CD4-positive, alpha-beta memory T cell (primary cell): ENCODE measurements at regions of chr16 and their contacts with region 1.

Region 1: DNA sequence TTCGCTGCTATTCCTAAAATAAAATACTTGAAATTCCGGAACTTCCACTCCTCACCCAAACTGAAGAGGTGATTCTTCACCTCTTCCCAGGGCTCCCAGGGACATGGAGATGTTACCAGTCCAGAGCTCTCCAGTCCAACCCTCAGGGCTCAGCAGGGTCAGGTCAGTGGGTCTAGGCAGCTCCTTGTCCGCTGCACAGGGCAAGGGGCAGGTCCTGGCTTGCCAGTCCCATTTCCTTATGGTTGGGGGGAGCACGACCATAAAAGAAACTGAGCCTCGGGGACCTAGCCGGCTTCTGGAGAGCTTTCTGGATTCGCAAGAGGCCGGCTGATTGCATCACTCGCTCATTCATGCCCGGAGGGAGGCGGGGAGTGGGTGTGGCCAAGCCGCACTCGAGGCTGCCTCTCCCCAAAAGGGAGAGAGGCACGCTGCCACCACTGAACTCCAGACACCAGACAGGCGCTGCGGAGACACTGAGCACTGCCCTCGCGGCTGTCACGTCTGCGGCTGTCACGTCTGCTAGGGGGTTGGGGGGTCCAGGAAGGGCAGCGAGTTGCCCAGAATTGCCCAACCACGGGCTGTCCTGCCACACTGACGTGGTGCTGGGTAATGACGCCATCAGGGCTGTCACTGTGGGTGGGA is 15.8 kb downstream of the SLC7A5 start:
- DNase-seq: peak; percentile 71 to 96 (median 77)
- H3K4me3 ChIP-seq: peak overlapping the region in 1 of 2 donors; percentile 31
- H3K4me3 Mint-ChIP-seq: peak overlapping the region in 7 of 8 donors; percentile 57 to 85 (median 68)
- H3K27ac ChIP-seq: peak overlapping the region; percentile 17
- H3K27ac Mint-ChIP-seq: peak overlapping the region; percentile 57 to 93 (median 84)
- H3K4me1 ChIP-seq: peaks cover 54% of the 10 kb centered on the region
- H3K4me1 Mint-ChIP-seq: peaks cover 12 to 63% (median 32%) of the 10 kb centered on the region in 4 donors
- H3K27me3 ChIP-seq: no peaks in the 10 kb centered on the region
- H3K27me3 Mint-ChIP-seq: no peaks in the 10 kb centered on the region

Region 2: GRCh38 chr16:87702325-87702811 is 151.2 kb before region 1 on chr16:
- CTCF ChIA-PET with region 1: no interaction called
- POLR2A ChIA-PET with region 1: no interaction called
- intact Hi-C with region 1: no loop called
- DNase-seq: peak in 3 of 5 donors; percentile 11 to 29 (median 24)
- H3K4me3 ChIP-seq: no peak overlapping the region
- H3K4me3 Mint-ChIP-seq: peak overlapping the region in 7 of 8 donors; percentile 15 to 71 (median 63)
- H3K27ac ChIP-seq: no peak overlapping the region
- H3K27ac Mint-ChIP-seq: peak overlapping the region; percentile 60 to 94 (median 86)
- H3K4me1 ChIP-seq: peaks cover 47% of the 10 kb centered on the region
- H3K4me1 Mint-ChIP-seq: peaks cover 28 to 65% (median 38%) of the 10 kb centered on the region in 4 donors
- H3K27me3 ChIP-seq: no peaks in the 10 kb centered on the region
- H3K27me3 Mint-ChIP-seq: no peaks in the 10 kb centered on the region

Region 3: GRCh38 chr16:87834623-87835407 is 18.7 kb before region 1 on chr16:
- CTCF ChIA-PET with region 1: interaction called, 34 read pairs
- POLR2A ChIA-PET with region 1: no interaction called
- intact Hi-C with region 1: no loop called
- DNase-seq: peak in 1 of 5 donors; percentile 44
- H3K4me3 ChIP-seq: no peak overlapping the region
- H3K4me3 Mint-ChIP-seq: no peak overlapping the region
- H3K27ac ChIP-seq: no peak overlapping the region
- H3K27ac Mint-ChIP-seq: peak overlapping the region in 1 of 7 donors; percentile 90
- H3K4me1 ChIP-seq: no peaks in the 10 kb centered on the region
- H3K4me1 Mint-ChIP-seq: no peaks in the 10 kb centered on the region
- H3K27me3 ChIP-seq: no peaks in the 10 kb centered on the region
- H3K27me3 Mint-ChIP-seq: no peaks in the 10 kb centered on the region

Region 4: DNA sequence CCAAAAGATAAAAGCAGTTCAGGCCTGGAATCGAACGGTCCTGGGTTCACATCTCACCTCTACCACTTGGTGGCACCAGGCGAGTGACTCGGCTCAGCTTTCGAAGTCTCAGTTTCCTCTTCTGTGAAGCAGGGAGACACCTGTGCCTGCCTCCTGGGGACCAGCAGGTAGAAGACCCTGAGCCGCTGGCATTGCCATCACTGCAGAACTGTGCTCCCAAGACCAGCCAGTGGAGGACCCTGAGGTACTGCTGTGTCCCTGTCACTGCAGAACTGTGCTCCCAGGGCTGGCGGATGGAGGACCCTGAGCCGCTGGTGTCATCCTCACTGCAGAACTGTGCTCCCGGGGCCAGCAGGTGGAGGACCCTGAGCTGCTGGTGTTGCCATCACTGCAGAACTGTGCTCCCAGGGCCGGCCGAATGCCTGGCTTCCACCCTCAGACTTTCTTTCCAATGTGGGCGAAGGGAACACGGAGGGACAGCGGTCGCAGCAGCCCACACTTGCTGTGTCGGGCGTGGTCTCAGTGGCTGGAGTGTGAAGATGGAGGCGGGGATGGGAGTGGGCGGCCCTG is 24.5 kb after region 1 on chr16:
- CTCF ChIA-PET with region 1: interaction called, 388 read pairs
- POLR2A ChIA-PET with region 1: interaction called, 3 read pairs
- intact Hi-C with region 1: no loop called
- DNase-seq: no peak
- H3K4me3 ChIP-seq: no peak overlapping the region
- H3K4me3 Mint-ChIP-seq: no peak overlapping the region
- H3K27ac ChIP-seq: no peak overlapping the region
- H3K27ac Mint-ChIP-seq: no peak overlapping the region
- H3K4me1 ChIP-seq: peaks cover 13% of the 10 kb centered on the region
- H3K4me1 Mint-ChIP-seq: peaks cover 6 to 11% (median 9%) of the 10 kb centered on the region in 4 donors
- H3K27me3 ChIP-seq: no peaks in the 10 kb centered on the region
- H3K27me3 Mint-ChIP-seq: peaks cover 2% of the 10 kb centered on the region in 2 donors

Region 5: DNA sequence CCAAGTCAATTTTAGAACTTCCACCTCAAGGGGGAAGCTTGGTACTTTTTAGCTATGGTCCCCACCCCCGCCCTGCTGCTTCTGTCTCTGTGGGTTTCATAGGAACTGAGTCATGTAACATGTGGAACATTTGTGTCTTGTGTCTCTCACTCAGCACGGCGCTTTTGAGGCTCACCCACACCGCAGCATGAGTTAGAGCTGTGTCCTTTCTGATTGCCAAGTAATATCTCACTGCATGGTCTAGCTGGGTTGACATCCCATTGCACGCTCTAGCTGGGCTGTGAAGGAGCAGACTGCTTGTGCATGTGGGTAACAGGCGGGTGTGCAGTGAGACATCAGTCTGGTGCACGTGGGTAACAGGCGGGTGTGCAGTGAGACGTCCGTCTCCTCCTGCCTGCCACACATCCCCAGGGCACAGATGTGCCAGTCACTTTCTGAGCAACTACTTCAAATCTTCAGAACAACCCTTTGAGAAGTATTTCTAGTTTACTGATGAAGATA is 42.2 kb after region 1 on chr16:
- CTCF ChIA-PET with region 1: interaction called, 14 read pairs
- POLR2A ChIA-PET with region 1: interaction called, 6 read pairs
- intact Hi-C with region 1: no loop called
- DNase-seq: peak in 4 of 5 donors; percentile 17 to 86 (median 27)
- H3K4me3 ChIP-seq: no peak overlapping the region
- H3K4me3 Mint-ChIP-seq: peak overlapping the region in 6 of 8 donors; percentile 36 to 83 (median 68)
- H3K27ac ChIP-seq: peak overlapping the region; percentile 13
- H3K27ac Mint-ChIP-seq: peak overlapping the region; percentile 66 to 93 (median 89)
- H3K4me1 ChIP-seq: peaks cover 34% of the 10 kb centered on the region
- H3K4me1 Mint-ChIP-seq: peaks cover 22 to 37% (median 29%) of the 10 kb centered on the region in 4 donors
- H3K27me3 ChIP-seq: no peaks in the 10 kb centered on the region
- H3K27me3 Mint-ChIP-seq: no peaks in the 10 kb centered on the region

Region 6: GRCh38 chr16:87914812-87915211 is 61.3 kb after region 1 on chr16:
- CTCF ChIA-PET with region 1: interaction called, 45 read pairs
- POLR2A ChIA-PET with region 1: interaction called, 3 read pairs
- intact Hi-C with region 1: no loop called
- DNase-seq: no peak
- H3K4me3 ChIP-seq: no peak overlapping the region
- H3K4me3 Mint-ChIP-seq: no peak overlapping the region
- H3K27ac ChIP-seq: no peak overlapping the region
- H3K27ac Mint-ChIP-seq: no peak overlapping the region
- H3K4me1 ChIP-seq: no peaks in the 10 kb centered on the region
- H3K4me1 Mint-ChIP-seq: no peaks in the 10 kb centered on the region
- H3K27me3 ChIP-seq: no peaks in the 10 kb centered on the region
- H3K27me3 Mint-ChIP-seq: peaks cover 4 to 5% of the 10 kb centered on the region in 2 donors